Activated CD4-positive, alpha-beta memory T cell treated with anti-CD3 and anti-CD28 coated beads for 36 hours (primary cell): ENCODE measurements at regions of chr10 and their contacts with region 1.

Region 1: GRCh38 chr10:110007701-110008517 is at the start of gene ADD3:
- DNase-seq: peak; percentile 92
- H3K4me3 Mint-ChIP-seq: no peak within 1 kb of the TSS
- H3K27ac Mint-ChIP-seq: peak within 1 kb of the TSS; percentile 81
- H3K4me1 Mint-ChIP-seq: peaks cover 40% of the 10 kb centered on the region
- H3K27me3 Mint-ChIP-seq: no peaks in the 10 kb centered on the region
- total RNA-seq, gene ADD3: 92.3 to 93.3 TPM

Region 2: DNA sequence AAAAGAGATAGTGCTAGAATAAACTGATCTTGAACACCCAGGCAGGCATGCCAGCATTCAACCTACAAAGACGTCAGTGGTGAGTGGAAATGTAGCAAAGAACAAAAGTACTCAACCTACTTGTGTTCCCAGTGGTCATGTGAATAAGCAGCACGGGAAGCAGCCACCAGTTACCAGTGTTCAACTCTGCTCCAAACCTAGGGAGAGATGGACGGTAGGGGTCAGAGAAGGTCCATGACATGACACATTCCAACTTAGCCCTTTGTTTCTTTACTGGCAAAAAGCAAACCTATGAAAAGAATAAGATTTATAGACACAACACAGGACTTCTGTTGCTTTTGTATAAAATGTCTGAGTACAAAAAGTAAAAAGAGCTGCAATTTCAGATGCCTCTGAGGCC is 596.0 kb before region 1 on chr10:
- CTCF ChIA-PET with region 1: no interaction called
- POLR2A ChIA-PET with region 1: no interaction called
- intact Hi-C with region 1: no loop called
- DNase-seq: no peak
- H3K4me3 Mint-ChIP-seq: no peak overlapping the region
- H3K27ac Mint-ChIP-seq: no peak overlapping the region
- H3K4me1 Mint-ChIP-seq: no peaks in the 10 kb centered on the region
- H3K27me3 Mint-ChIP-seq: no peaks in the 10 kb centered on the region

Region 3: DNA sequence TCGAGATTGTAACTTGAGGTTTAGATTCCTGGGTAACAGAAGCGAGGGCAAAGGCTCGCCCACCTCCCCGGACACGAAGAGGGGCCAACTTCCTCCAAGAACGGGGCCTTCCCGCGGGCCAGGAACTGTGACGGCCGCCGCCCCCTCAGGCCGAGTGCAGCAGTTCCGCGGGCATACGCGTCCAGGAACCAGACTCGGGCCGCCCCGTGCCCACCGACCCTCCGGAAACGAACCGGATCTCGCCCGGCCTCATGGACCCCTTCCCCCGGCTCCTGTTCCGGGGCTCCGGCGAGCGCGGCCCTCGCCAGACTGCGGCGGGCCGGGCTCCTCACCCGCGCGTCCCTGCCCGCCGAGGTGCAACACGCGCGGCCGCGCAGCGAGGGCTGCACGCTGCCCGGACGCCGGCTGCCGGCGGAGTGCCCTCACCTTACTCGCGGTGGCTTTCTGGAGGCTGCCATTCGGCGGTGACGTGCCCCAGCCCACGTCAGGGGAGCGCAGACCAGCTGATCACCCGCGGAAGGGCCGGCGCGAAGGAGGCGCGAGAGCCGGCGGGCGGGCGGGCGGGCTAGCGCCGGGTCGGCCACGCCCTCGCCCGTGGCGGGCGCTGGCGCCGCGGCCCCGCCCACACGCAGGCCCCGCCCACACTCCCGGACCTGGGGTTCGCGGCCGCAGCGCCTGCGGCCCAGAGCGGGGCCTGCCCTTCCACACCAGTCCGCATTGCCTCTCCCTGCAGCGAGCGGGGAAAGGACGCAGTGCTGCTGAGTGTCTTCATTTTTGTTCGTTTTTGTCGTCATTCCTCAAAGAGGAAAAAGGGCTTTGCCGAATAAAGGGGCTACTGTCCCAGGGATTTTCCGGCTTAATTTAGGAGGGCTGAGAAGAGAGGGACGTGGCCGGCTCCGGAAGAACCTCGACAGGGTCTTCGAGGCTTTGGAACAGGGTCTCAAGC is 84.7 kb before region 1 on chr10 and contains the start of gene XPNPEP1:
- CTCF ChIA-PET with region 1: no interaction called
- POLR2A ChIA-PET with region 1: interaction called, 4 read pairs
- intact Hi-C with region 1: loop called (anchors 1 kb)
- DNase-seq: peak; percentile 90
- H3K4me3 Mint-ChIP-seq: peak within 1 kb of the TSS; percentile 90
- H3K27ac Mint-ChIP-seq: peak within 1 kb of the TSS; percentile 93
- H3K4me1 Mint-ChIP-seq: peaks cover 56% of the 10 kb centered on the region
- H3K27me3 Mint-ChIP-seq: no peaks in the 10 kb centered on the region
- total RNA-seq, gene XPNPEP1: 66.4 to 66.6 TPM

Region 4: GRCh38 chr10:109978481-109978880 is 29.4 kb before region 1 on chr10:
- CTCF ChIA-PET with region 1: interaction called, 14 read pairs
- POLR2A ChIA-PET with region 1: no interaction called
- intact Hi-C with region 1: loop called (anchors 2 kb)
- DNase-seq: peak; percentile 76
- H3K4me3 Mint-ChIP-seq: no peak overlapping the region
- H3K27ac Mint-ChIP-seq: no peak overlapping the region
- H3K4me1 Mint-ChIP-seq: peaks cover 4% of the 10 kb centered on the region
- H3K27me3 Mint-ChIP-seq: no peaks in the 10 kb centered on the region

Region 5: GRCh38 chr10:110045772-110046171 is 37.9 kb after region 1 on chr10:
- CTCF ChIA-PET with region 1: interaction called, 3 read pairs
- POLR2A ChIA-PET with region 1: interaction called, 6 read pairs
- intact Hi-C with region 1: loop called (anchors 1 kb)
- DNase-seq: no peak
- H3K4me3 Mint-ChIP-seq: peak overlapping the region; percentile 23
- H3K27ac Mint-ChIP-seq: peak overlapping the region; percentile 59
- H3K4me1 Mint-ChIP-seq: peaks cover 72% of the 10 kb centered on the region
- H3K27me3 Mint-ChIP-seq: no peaks in the 10 kb centered on the region

Region 6: GRCh38 chr10:110076559-110077318 is 68.8 kb after region 1 on chr10:
- CTCF ChIA-PET with region 1: interaction called, 6 read pairs
- POLR2A ChIA-PET with region 1: interaction called, 7 read pairs
- intact Hi-C with region 1: loop called (anchors 1 kb)
- DNase-seq: no peak
- H3K4me3 Mint-ChIP-seq: peak overlapping the region; percentile 81
- H3K27ac Mint-ChIP-seq: peak overlapping the region; percentile 98
- H3K4me1 Mint-ChIP-seq: peaks cover 84% of the 10 kb centered on the region
- H3K27me3 Mint-ChIP-seq: no peaks in the 10 kb centered on the region

Region 7: DNA sequence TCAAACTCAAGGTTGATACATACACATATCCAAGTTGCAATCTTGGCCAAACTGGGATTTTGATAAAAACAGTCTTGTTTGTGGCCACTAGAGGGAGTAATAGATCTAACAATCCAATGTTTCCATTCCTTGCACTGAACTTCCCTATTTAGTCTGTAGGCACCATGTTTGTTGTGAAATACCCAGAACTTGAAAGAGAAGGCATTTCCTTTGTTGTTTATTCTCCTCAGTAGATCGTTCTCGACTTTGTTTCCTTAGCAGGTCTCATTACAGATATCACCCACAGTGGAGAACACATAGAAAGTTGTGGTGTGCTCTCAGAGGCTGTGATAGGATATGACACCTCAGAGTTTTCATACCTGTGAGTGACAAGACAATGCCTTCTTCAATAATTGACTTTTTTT is 129.2 kb after region 1 on chr10:
- CTCF ChIA-PET with region 1: no interaction called
- POLR2A ChIA-PET with region 1: no interaction called
- intact Hi-C with region 1: loop called (anchors 1 kb)
- DNase-seq: no peak
- H3K4me3 Mint-ChIP-seq: no peak overlapping the region
- H3K27ac Mint-ChIP-seq: peak overlapping the region; percentile 6
- H3K4me1 Mint-ChIP-seq: peaks cover 37% of the 10 kb centered on the region
- H3K27me3 Mint-ChIP-seq: no peaks in the 10 kb centered on the region

Region 8: DNA sequence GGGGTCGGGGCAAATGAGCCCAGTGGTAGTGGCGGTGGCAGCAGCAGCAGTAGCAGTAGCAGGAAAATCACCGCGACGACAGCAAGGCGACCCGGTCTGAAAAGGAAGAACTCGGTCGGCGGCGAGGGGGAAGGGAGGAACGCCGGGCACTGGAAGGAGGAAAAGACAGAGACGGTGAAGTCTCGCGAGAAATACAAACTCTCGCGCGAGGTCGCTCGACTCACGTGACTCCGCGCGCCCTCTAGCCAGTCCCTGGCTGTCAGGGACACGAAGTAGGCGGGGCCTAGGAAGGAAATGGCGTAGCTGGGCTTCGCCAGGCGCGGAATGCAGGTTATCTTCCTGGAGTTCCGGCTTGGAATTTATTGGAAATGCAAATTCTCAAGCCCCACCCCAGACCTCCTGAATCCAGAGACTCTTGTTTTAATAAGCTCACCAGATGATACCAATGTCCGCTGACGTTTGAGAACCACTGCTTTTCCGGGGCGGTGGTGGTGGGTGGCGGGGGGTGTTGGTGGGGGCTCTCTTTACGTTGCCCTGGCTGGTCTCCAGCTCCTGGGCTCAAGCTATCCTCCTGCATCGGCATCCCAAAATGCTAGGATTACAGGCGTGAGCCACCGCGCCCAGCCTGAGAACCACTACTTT is 297.0 kb after region 1 on chr10 and contains the start of gene SMNDC1:
- CTCF ChIA-PET with region 1: no interaction called
- POLR2A ChIA-PET with region 1: no interaction called
- intact Hi-C with region 1: loop called (anchors 2 kb)
- DNase-seq: peak; percentile 99
- H3K4me3 Mint-ChIP-seq: peak within 1 kb of the TSS; percentile 93
- H3K27ac Mint-ChIP-seq: peak within 1 kb of the TSS; percentile 97
- H3K4me1 Mint-ChIP-seq: peaks cover 49% of the 10 kb centered on the region
- H3K27me3 Mint-ChIP-seq: no peaks in the 10 kb centered on the region
- total RNA-seq, gene SMNDC1: 44.1 to 48.3 TPM